Prostate gland (tissue), 2 donors: ENCODE measurements at regions of chr10 and their contacts with region 1.

Region 1: GRCh38 chr10:44673245-44673983 is 237.7 kb upstream of the TMEM72 start:
- DNase-seq: peak; percentile 40
- H3K4me3 ChIP-seq: no peak overlapping the region
- H3K27ac ChIP-seq: no peak overlapping the region
- H3K4me1 ChIP-seq: no peaks in the 10 kb centered on the region
- H3K27me3 ChIP-seq: no peaks in the 10 kb centered on the region
- CTCF ChIP-seq: no peak
- POLR2A ChIP-seq: no peak

Region 2: DNA sequence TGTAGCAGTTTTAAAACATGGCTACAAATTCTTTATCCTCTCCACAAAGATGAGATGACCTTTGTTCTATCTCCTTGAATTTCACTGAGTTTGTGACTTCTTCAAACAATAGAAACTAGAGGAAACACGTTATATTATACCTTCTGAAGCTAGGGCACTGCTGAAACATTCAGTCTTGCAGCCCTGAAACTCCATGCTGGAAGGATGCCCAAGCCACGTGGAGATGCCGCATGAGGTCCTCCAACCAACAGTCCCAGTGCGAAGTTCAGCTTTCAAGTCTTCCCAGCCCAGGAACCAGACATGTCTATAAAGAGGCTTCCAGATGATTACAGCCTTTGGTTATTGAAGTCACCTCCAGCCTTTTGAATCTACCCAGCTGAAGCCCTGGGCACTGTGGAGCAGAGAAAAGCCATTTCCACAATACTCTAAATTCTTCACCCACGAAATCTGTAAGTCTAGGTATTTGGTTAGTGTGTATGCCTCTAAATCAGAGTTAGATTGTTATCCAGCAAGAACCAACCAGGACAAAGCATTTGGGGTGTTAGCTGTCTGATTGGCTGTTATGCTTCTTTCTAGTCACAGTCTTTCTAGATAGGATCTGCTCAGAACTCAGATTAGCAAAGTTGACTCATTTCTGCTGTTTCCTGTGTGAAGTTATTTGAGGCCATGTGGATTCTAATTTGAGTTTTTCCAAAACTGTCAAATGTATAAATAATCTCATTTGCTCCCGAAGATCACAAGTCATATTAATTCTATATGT is 51.2 kb after region 1 on chr10:
- intact Hi-C with region 1: no loop called
- DNase-seq: no peak
- H3K4me3 ChIP-seq: no peak overlapping the region
- H3K27ac ChIP-seq: no peak overlapping the region
- H3K4me1 ChIP-seq: no peaks in the 10 kb centered on the region
- H3K27me3 ChIP-seq: no peaks in the 10 kb centered on the region
- CTCF ChIP-seq: no peak
- POLR2A ChIP-seq: no peak

Region 3: DNA sequence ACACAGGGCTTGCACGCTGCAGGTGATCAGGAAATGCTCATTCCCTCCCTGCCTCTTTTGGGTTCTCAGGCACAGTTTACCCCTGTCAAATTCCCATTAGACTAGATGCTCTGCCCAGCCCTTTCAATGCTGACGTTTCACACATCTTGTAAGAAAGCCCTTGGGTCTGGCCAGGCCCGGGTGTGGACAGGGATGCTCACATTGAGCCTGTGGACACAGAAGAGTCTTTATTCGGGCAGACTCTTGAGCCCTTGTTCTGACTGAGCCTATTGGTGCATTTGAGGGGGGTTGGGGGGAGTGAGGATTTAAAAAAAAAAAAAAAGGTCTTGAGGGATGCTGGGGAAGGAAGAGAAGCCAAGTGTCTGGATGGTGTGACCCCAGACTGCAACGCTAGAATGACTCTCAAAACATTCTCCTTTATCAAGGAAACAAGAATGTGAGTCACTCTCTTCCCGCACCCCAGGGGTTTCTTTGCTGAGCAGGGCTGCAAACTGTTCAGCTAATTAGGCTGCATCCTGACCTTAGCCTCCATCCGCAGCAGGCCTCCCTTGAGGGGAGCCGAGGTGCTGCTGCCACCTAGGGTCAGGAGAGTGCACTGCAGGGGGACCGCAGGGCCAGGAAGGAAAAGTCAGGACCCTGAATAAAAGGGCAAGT is 184.1 kb after region 1 on chr10:
- intact Hi-C with region 1: loop called (anchors 10 kb)
- DNase-seq: no peak
- H3K4me3 ChIP-seq: no peak overlapping the region
- H3K27ac ChIP-seq: no peak overlapping the region
- H3K4me1 ChIP-seq: no peaks in the 10 kb centered on the region
- H3K27me3 ChIP-seq: no peaks in the 10 kb centered on the region
- CTCF ChIP-seq: peak; percentile 78 to 93 (median 86)
- POLR2A ChIP-seq: no peak